SK-N-SH (cell line): ENCODE measurements at regions of chr3 and their contacts with region 1.

Region 1: DNA sequence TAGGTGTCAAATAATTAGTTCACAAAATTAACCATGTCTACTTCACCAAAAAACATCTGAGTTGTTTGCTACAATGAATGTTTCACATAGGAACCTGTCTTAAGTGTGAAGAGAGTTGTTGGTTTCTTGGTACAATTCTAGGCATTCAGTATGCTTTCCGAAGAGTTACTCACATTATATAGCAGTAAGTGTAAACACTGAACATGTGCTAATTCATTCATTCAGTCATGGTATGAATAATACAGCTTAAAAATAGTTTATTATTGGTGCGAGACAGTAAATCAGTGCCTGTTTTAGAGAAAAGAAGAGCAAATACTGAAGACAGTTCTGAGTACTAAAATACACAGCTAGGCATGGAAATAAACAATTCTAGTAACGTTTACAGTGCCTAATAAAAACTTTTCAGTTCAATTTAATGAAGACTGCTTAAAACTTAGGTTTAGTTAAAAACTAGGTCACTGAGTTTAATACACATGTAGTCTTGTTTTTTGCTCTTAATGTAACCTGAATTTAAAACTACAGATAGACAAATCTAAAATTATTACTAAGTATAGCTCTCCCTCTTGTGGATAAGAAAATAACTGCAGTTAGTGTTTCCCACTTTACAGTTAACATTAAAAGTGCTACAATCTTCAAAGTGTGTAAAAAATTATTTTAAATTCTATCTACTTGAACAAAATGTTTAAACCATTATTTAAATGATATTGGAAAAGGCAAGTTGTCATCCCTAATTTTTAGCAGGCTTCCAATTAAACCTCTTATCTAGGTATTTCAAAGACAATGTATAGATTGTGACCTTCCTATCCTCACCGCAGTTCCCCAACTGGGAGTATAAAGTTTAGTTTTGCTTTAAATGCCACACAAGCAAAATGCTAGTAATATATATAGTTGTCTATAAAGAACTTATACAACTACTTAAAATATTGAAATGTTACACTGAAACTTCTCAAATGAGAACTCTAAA is 20.1 kb upstream of the ZCWPW2 start:
- DNase-seq: no peak
- H3K4me3 ChIP-seq: no peak overlapping the region
- H3K27ac ChIP-seq: no peak overlapping the region
- H3K4me1 ChIP-seq: no peaks in the 10 kb centered on the region; a peak in 1 of 4 replicates
- H3K27me3 ChIP-seq: no peaks in the 10 kb centered on the region
- CTCF ChIP-seq: peak; percentile 85
- EP300 ChIP-seq: no peak
- RAD21 ChIP-seq: peak; percentile 66

Region 2: GRCh38 chr3:28308196-28308595 is 20.3 kb before region 1 on chr3:
- CTCF ChIA-PET with region 1: interaction called, 10 read pairs
- POLR2A ChIA-PET with region 1: no interaction called
- DNase-seq: no peak
- H3K4me3 ChIP-seq: no peak overlapping the region
- H3K27ac ChIP-seq: no peak overlapping the region
- H3K4me1 ChIP-seq: no peaks in the 10 kb centered on the region
- H3K27me3 ChIP-seq: no peaks in the 10 kb centered on the region
- CTCF ChIP-seq: no peak
- EP300 ChIP-seq: no peak
- RAD21 ChIP-seq: no peak

Region 3: DNA sequence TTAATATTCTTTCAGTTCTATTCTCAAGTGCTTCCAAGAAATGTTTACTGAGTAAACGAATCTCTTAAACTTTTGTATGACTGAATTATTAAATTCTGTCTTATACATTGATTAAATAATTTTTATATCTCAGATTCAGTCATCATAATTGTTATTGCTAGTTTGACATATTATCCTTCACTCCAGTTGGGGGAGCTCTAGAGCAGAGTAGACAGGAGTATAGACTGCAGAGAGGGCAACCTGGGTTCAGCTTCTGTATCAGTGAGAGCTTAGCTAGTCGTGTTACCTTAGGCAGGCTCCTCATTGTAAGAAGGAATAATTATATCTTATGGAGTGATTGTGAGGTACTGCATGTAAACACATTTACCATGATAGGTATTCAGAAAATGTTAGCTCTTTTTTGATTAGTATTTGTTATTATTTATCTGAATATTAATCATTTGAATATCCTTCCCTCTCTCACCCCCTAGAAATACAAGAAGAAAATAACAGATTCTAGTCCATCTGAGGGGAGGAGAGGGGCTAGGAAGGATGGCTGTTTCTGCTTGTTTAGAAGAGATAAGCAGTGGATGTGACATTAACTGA is 10.9 kb before region 1 on chr3:
- CTCF ChIA-PET with region 1: interaction called, 15 read pairs
- POLR2A ChIA-PET with region 1: no interaction called
- DNase-seq: peak; percentile 33
- H3K4me3 ChIP-seq: no peak overlapping the region
- H3K27ac ChIP-seq: no peak overlapping the region
- H3K4me1 ChIP-seq: peaks cover 0 to 5% of the 10 kb centered on the region in 2 experiments; a peak in 1 of 4 replicates
- H3K27me3 ChIP-seq: no peaks in the 10 kb centered on the region
- CTCF ChIP-seq: peak; percentile 71
- EP300 ChIP-seq: no peak
- RAD21 ChIP-seq: peak; percentile 43

Region 4: DNA sequence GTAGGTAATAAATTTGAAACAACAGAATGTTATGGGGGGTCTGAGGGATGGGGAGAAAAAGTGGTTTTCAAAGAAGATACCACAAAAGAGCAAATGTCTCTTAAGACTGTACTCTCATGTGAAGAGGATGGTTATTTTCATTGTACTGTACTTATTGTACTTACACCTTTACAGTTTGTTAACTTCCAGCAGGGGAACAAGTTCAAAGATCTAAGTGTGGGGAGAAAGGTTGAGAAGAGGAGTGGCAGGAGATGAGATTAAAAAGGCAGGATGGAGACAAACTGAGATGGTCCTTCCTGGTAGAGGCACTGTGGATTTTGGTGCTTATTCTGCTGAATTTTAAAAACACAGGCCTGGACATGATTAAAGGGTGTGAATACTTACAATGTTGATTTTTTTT is 14.7 kb after region 1 on chr3:
- CTCF ChIA-PET with region 1: interaction called, 20 read pairs
- POLR2A ChIA-PET with region 1: no interaction called
- DNase-seq: no peak
- H3K4me3 ChIP-seq: peak overlapping the region in 1 of 2 experiments; percentile 18; a peak in 1 of 4 replicates
- H3K27ac ChIP-seq: no peak overlapping the region
- H3K4me1 ChIP-seq: peaks cover 6 to 30% of the 10 kb centered on the region in 2 experiments; a peak in 2 of 4 replicates
- H3K27me3 ChIP-seq: no peaks in the 10 kb centered on the region
- CTCF ChIP-seq: no peak
- EP300 ChIP-seq: no peak
- RAD21 ChIP-seq: no peak

Region 5: DNA sequence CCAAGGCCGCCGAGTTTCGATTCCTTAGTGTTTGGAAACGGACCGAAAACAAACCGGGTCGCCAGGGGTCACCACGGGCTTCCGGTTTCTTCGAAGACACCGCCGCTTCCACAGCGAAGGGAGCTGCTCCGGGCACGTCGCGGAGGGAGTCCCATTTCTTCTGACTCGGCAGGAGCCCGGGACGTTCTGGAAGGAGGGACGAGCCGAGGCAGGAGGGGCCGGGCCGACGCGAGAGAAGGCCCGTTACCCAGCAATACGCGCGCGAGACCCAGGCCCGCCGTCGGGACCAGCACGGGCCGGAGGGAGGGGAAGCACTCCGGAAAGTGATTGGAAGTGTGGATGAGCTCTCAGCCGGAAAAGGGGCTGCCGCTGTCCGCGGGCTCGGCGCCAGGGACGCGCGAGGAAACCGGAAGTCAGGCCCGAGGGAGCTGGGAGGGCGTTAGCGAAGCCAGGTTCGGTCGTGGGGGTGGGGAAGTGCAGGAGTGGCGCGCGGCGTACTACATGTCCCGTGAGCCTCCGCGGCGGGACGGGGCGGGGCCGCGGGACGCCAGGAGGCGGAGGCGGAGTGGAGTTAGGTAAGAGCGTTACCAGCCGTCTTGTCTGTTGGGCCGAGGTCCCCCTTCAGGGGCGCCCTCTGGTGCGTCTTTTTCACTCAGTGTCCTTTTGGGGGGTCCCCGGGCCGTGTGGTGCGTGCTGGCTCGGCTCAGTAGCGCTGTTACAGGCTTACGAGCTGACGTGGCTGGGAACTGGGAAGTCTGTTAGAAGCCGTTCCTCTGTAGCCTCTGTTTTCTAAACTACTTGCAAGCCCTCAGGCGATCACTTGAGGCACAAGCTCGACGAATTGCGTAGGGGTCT is 20.4 kb after region 1 on chr3 and contains the starts of genes AZI2 and ZCWPW2:
- CTCF ChIA-PET with region 1: interaction called, 20 read pairs
- POLR2A ChIA-PET with region 1: no interaction called
- DNase-seq: peak; percentile 91
- H3K4me3 ChIP-seq: peak within 1 kb of the TSS; percentile 88 to 93
- H3K27ac ChIP-seq: peak within 1 kb of the TSS; percentile 97 to 99
- H3K4me1 ChIP-seq: peaks cover 6 to 26% of the 10 kb centered on the region in 2 experiments; a peak in 2 of 4 replicates
- H3K27me3 ChIP-seq: no peaks in the 10 kb centered on the region
- CTCF ChIP-seq: peak; percentile 34; the same call in 1 of the 2 replicates
- EP300 ChIP-seq: no peak
- RAD21 ChIP-seq: no peak
- polyA plus RNA-seq, gene AZI2: 27.3 and 32.7 TPM in 2 replicates
- polyA plus RNA-seq, gene ZCWPW2: 0.13 and 0.15 TPM in 2 replicates